Esophagus muscularis mucosa (tissue), 4 donors: ENCODE measurements at regions of chr22 and their contacts with region 1.

Region 1: GRCh38 chr22:50627642-50628542 is at the start of gene ARSA:
- DNase-seq: no peak
- H3K4me3 ChIP-seq: peak within 1 kb of the TSS; percentile 70 to 87 (median 79)
- H3K27ac ChIP-seq: peak within 1 kb of the TSS; percentile 78 to 85 (median 79)
- H3K4me1 ChIP-seq: peaks cover 17 to 30% (median 21%) of the 10 kb centered on the region in 4 donors
- H3K27me3 ChIP-seq: no peaks in the 10 kb centered on the region
- CTCF ChIP-seq: peak; percentile 37 to 43 (median 39)
- EP300 ChIP-seq: no peak
- POLR2A ChIP-seq: no peak
- total RNA-seq, gene ARSA: 24.5 to 49.4 (median 28.8) TPM

Region 2: GRCh38 chr22:50474668-50475492 is 153.0 kb before region 1 on chr22 and contains the start of gene SBF1:
- intact Hi-C with region 1: no loop called
- DNase-seq: peak; percentile 96
- H3K4me3 ChIP-seq: peak within 1 kb of the TSS; percentile 84 to 98 (median 94)
- H3K27ac ChIP-seq: peak within 1 kb of the TSS; percentile 85 to 90 (median 90)
- H3K4me1 ChIP-seq: peaks cover 43 to 53% (median 50%) of the 10 kb centered on the region in 4 donors
- H3K27me3 ChIP-seq: peaks cover 0 to 15% (median 0%) of the 10 kb centered on the region in 4 donors
- CTCF ChIP-seq: no peak
- EP300 ChIP-seq: no peak
- POLR2A ChIP-seq: peak; percentile 8
- total RNA-seq, gene SBF1: 56.1 to 121 (median 86.9) TPM

Region 3: DNA sequence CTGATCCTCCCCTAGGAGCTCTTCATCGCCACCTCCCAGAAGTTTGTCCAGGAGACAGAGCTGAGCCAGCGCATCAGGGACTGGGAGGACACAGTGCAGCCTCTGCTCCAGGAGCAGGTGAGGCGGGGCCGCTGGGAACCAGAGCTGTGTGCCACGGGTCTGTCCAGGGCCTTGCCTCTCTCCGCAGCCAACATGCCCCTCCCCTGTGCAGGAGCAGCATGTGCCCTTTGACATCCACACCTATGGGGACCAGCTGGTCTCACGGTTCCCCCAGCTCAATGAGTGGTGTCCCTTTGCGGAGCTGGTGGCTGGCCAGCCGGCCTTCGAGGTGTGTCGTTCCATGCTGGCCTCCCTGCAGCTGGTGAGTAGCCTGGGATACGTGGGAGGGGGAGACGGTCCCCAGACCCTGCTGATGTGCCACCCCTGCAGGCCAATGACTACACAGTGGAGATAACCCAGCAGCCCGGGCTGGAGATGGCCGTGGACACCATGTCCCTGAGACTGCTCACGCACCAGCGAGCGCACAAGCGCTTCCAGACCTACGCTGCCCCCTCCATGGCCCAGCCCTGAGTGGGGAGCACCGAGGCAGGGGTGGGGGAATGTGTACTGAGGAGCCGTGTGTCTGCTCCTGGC is 105.0 kb before region 1 on chr22:
- intact Hi-C with region 1: no loop called
- DNase-seq: no peak
- H3K4me3 ChIP-seq: no peak overlapping the region
- H3K27ac ChIP-seq: no peak overlapping the region
- H3K4me1 ChIP-seq: peaks cover 21 to 41% (median 32%) of the 10 kb centered on the region in 4 donors
- H3K27me3 ChIP-seq: no peaks in the 10 kb centered on the region
- CTCF ChIP-seq: no peak
- EP300 ChIP-seq: no peak
- POLR2A ChIP-seq: no peak

Region 4: GRCh38 chr22:50532824-50533796 is 94.8 kb before region 1 on chr22:
- intact Hi-C with region 1: no loop called
- DNase-seq: no peak
- H3K4me3 ChIP-seq: peak overlapping the region in 1 of 4 donors; percentile 62
- H3K27ac ChIP-seq: peak overlapping the region; percentile 79 to 93 (median 88)
- H3K4me1 ChIP-seq: peaks cover 24 to 45% (median 44%) of the 10 kb centered on the region in 4 donors
- H3K27me3 ChIP-seq: peaks cover 10 to 91% (median 40%) of the 10 kb centered on the region in 4 donors
- CTCF ChIP-seq: no peak
- EP300 ChIP-seq: no peak
- POLR2A ChIP-seq: no peak

Region 5: DNA sequence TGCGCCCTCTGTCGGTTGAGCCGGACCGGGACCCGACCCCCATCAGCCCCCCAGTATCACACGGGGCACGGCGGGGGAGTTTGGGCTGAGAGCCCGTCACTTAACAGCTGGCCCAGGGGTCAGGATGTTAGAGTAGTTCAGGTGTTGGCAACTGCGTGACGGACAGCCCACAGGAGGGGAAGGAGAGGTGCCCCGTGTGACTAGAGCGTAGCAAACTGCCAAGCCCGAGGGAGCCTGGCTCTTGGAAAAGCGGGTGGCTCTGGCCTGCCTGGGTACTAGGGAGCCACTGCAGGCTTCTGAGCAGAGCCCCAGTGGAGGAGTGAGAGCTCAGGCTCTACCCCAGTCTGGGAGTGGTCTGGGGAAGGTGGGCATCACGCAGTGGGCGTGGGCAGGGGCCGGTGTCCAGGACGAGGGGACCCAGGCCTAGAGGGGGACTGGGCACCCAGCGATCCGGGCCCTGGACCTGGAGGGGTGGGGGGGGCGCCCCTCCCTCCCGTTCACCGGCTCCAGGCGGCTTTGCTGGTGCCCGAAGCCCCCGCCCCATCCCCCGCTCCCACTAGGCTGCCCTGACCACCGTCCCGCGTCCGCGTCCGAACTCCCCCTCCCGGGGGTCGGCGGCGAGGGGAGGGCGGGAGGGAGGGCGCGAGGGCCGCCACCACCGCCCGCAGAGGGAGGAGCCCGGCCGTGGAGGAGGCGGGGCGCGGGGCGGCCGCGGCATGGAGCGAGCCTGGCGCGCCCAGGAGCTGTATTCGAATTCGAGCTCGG is 69.1 kb after region 1 on chr22:
- intact Hi-C with region 1: loop called (anchors 5 kb)
- DNase-seq: no peak
- H3K4me3 ChIP-seq: peak overlapping the region; percentile 58 to 69 (median 60)
- H3K27ac ChIP-seq: no peak overlapping the region
- H3K4me1 ChIP-seq: peaks cover 37 to 47% (median 39%) of the 10 kb centered on the region in 4 donors
- H3K27me3 ChIP-seq: peaks cover 0 to 8% (median 0%) of the 10 kb centered on the region in 4 donors
- CTCF ChIP-seq: peak in 2 of 3 experiments; percentile 22 to 52
- EP300 ChIP-seq: no peak
- POLR2A ChIP-seq: no peak